HepG2 (cell line): ENCODE measurements at regions of chr10 and their contacts with region 1.

Region 1: GRCh38 chr10:104121520-104122224 is at the start of gene SFR1:
- DNase-seq: peak; percentile 95
- ATAC-seq: peak; percentile 95
- H3K4me3 ChIP-seq: peak within 1 kb of the TSS; percentile 78 to 87 (median 83)
- H3K27ac ChIP-seq: peak within 1 kb of the TSS; percentile 98
- H3K4me1 ChIP-seq: peaks cover 23% of the 10 kb centered on the region
- H3K27me3 ChIP-seq: peaks cover 0 to 2% of the 10 kb centered on the region in 2 experiments; a peak in 1 of 5 replicates
- CTCF ChIP-seq: peak; percentile 90
- EP300 ChIP-seq: no peak; a peak in 1 of 4 replicates
- POLR2A ChIP-seq: peak; percentile 71 to 92
- RAD21 ChIP-seq: peak; percentile 50
- total RNA-seq, gene SFR1: 6.1 and 6.9 TPM in 2 replicates

Region 2: GRCh38 chr10:103888113-103888841 is 233.4 kb before region 1 on chr10:
- CTCF ChIA-PET with region 1: no interaction called
- POLR2A ChIA-PET with region 1: no interaction called
- in situ Hi-C with region 1: loop called (anchors 5 kb)
- intact Hi-C with region 1: no loop called
- DNase-seq: peak; percentile 41
- ATAC-seq: peak; percentile 71
- H3K4me3 ChIP-seq: no peak overlapping the region
- H3K27ac ChIP-seq: no peak overlapping the region
- H3K4me1 ChIP-seq: peaks cover 30% of the 10 kb centered on the region
- H3K27me3 ChIP-seq: no peaks in the 10 kb centered on the region
- CTCF ChIP-seq: peak; percentile 81
- EP300 ChIP-seq: no peak
- POLR2A ChIP-seq: no peak
- RAD21 ChIP-seq: peak; percentile 72

Region 3: DNA sequence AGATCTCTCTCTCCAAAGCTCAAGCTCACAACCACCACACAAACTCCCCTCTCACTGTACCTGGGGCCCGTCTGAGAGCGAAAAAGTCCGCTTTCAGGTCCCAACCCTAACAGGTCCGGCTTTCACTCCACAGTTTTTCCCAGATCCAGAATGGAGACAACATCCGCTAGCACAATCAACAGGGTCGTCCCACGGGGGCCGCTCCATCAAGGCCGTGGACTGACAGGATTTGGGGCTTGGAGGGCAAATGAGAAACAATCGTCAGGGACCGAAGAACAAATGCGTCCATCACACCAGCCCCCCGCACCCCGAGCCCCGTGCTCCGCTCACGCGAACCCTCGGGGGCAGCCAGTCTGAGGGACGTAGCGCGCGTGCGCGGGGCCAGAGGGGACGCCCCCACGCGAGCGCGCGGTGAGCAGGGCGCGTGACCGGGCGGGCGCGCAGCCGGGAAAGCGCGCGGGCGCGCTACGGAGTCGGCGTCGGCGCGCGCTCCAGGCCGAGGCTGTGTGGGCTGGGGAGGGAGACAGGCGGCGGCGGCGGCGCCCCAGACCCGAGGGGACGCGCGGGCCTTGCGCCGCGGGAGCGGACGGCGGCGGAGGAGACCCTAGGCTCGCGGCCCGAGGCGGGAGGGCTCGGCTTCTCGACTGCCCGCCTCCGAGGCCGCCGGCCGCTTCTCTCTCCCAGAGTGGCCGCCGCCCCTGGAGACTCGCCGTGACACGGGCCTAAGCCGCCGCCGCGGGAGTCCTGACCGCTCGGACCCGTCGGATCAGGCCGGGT is 154.8 kb before region 1 on chr10 and contains the start of gene SLK:
- CTCF ChIA-PET with region 1: no interaction called
- POLR2A ChIA-PET with region 1: interaction called, 5 read pairs
- in situ Hi-C with region 1: no loop called
- intact Hi-C with region 1: loop called (anchors 5 kb)
- DNase-seq: peak; percentile 53
- ATAC-seq: peak; percentile 87
- H3K4me3 ChIP-seq: peak within 1 kb of the TSS; percentile 83 to 93 (median 88)
- H3K27ac ChIP-seq: peak within 1 kb of the TSS; percentile 85
- H3K4me1 ChIP-seq: peaks cover 35% of the 10 kb centered on the region
- H3K27me3 ChIP-seq: peaks cover 0 to 3% of the 10 kb centered on the region in 2 experiments; a peak in 1 of 5 replicates
- CTCF ChIP-seq: no peak
- EP300 ChIP-seq: no peak
- POLR2A ChIP-seq: peak; percentile 44 to 85; a peak in 3 of 4 replicates
- RAD21 ChIP-seq: no peak; the same call in 1 of the 2 replicates
- total RNA-seq, gene SLK: 22.8 and 35.0 TPM in 2 replicates

Region 4: GRCh38 chr10:104045151-104046089 is 76.3 kb before region 1 on chr10:
- CTCF ChIA-PET with region 1: no interaction called
- POLR2A ChIA-PET with region 1: no interaction called
- in situ Hi-C with region 1: no loop called
- intact Hi-C with region 1: no loop called
- DNase-seq: peak; percentile 45
- ATAC-seq: peak; percentile 89
- H3K4me3 ChIP-seq: no peak overlapping the region
- H3K27ac ChIP-seq: no peak overlapping the region
- H3K4me1 ChIP-seq: peaks cover 9% of the 10 kb centered on the region
- H3K27me3 ChIP-seq: peaks cover 6 to 71% of the 10 kb centered on the region in 2 experiments
- CTCF ChIP-seq: peak; percentile 70
- EP300 ChIP-seq: no peak
- POLR2A ChIP-seq: no peak
- RAD21 ChIP-seq: peak; percentile 58

Region 5: DNA sequence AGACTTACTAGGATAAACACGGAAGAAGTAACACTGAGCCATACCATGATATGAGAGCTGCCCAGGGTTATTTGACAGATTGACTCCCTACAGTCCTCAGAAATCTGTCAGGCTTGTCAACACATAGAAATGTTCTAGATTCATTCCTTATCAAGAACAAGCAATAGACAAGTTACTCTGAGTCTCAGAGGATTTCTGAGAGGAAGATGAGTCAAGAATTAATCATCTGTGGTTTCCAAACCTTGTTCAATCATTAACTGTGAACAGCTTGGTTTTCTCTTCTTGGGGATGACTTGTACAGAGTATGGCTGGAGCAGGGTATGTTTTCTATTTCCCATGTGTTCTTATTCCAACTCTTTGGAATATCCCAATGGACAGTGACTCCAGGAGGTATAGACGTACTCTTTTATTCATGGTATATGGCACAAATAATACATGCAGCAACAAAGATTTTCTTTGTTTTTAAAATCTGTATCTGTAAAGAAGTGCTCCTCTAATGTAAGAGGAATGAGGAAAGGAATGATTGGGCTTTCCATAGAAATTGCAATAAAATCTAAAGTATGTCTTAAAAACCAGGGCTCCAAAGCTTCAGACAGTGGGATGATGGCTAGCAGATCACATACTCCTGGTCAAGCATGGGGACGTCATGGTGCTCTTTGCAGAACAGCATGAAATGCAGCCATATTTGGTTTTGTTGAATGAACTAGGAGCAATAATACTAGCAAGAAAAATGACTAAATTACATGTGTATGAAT is 11.6 kb before region 1 on chr10:
- CTCF ChIA-PET with region 1: no interaction called
- POLR2A ChIA-PET with region 1: interaction called, 16 read pairs
- in situ Hi-C with region 1: no loop called
- intact Hi-C with region 1: no loop called
- DNase-seq: peak; percentile 35
- ATAC-seq: peak; percentile 55; the same call in 2 of the 3 replicates
- H3K4me3 ChIP-seq: no peak overlapping the region
- H3K27ac ChIP-seq: no peak overlapping the region
- H3K4me1 ChIP-seq: peaks cover 12% of the 10 kb centered on the region
- H3K27me3 ChIP-seq: no peaks in the 10 kb centered on the region
- CTCF ChIP-seq: no peak
- EP300 ChIP-seq: peak in 1 of 2 experiments; percentile 35; a peak in 1 of 4 replicates
- POLR2A ChIP-seq: no peak
- RAD21 ChIP-seq: no peak

Region 6: GRCh38 chr10:104231784-104232612 is 110.3 kb after region 1 on chr10 and contains the start of gene CFAP43:
- CTCF ChIA-PET with region 1: no interaction called
- POLR2A ChIA-PET with region 1: interaction called, 12 read pairs
- in situ Hi-C with region 1: no loop called
- intact Hi-C with region 1: no loop called
- DNase-seq: peak; percentile 93
- ATAC-seq: peak; percentile 100
- H3K4me3 ChIP-seq: peak within 1 kb of the TSS; percentile 79 to 93 (median 86)
- H3K27ac ChIP-seq: peak within 1 kb of the TSS; percentile 82
- H3K4me1 ChIP-seq: peaks cover 21% of the 10 kb centered on the region
- H3K27me3 ChIP-seq: no peaks in the 10 kb centered on the region; a peak in 1 of 5 replicates
- CTCF ChIP-seq: no peak; the same call in 1 of the 2 replicates
- EP300 ChIP-seq: no peak
- POLR2A ChIP-seq: peak; percentile 49 to 61; a peak in 3 of 4 replicates
- RAD21 ChIP-seq: peak; percentile 30; the same call in 1 of the 2 replicates
- total RNA-seq, gene CFAP43: 0.24 and 0.46 TPM in 2 replicates

Region 7: DNA sequence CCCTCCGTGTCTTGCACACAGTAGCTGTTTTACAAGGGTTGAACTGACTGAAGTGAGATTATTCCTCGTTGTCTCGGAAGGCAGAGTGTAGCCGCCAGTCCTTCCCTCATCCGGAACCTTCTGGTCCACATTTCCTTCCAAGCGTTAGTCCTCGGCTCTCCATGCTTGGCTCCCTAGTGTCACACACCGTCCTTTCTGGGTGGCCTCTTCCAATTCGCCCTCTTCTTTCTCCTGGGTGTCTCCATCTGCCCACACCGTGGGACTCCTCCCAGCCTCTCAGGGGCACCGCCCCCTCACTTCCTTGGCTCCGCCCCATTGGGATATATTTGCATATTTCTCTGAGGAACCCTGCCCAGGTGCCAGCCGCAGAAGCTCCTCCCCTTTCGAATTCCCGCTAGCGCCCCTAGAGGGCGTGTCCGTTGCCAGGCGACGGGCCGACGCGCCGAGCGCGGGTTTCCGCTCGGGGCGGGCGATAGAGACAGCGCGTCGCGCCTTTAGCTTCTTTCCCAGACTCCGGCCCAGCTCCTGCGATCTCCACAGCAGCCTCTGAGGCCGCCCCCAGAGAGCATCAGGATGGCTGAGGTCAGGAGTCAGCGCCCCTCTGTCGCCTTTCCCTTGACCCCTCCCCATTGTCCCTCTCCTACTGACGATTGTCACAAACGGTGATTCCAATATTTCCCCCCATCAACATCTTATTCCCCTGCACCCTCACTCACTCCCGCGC is 231.8 kb after region 1 on chr10 and contains the start of gene CFAP58:
- CTCF ChIA-PET with region 1: no interaction called
- POLR2A ChIA-PET with region 1: no interaction called
- in situ Hi-C with region 1: no loop called
- intact Hi-C with region 1: loop called (anchors 5 kb)
- DNase-seq: peak; percentile 45
- ATAC-seq: peak; percentile 62
- H3K4me3 ChIP-seq: peak within 1 kb of the TSS in 1 of 3 experiments; percentile 17; a peak in 1 of 6 replicates
- H3K27ac ChIP-seq: no peak within 1 kb of the TSS
- H3K4me1 ChIP-seq: peaks cover 28% of the 10 kb centered on the region
- H3K27me3 ChIP-seq: peaks cover 0 to 22% of the 10 kb centered on the region in 2 experiments; a peak in 3 of 5 replicates
- CTCF ChIP-seq: peak; percentile 73
- EP300 ChIP-seq: no peak
- POLR2A ChIP-seq: no peak
- RAD21 ChIP-seq: 0 out of 2 replicates have a peak, but pooled peaks have one; percentile 16
- total RNA-seq, gene CFAP58: not detected in 2 replicates

Region 8: GRCh38 chr10:104622598-104623209 is 501.0 kb after region 1 on chr10:
- CTCF ChIA-PET with region 1: no interaction called
- POLR2A ChIA-PET with region 1: no interaction called
- in situ Hi-C with region 1: no loop called
- intact Hi-C with region 1: no loop called
- DNase-seq: peak; percentile 16
- ATAC-seq: peak; percentile 91
- H3K4me3 ChIP-seq: no peak overlapping the region
- H3K27ac ChIP-seq: no peak overlapping the region
- H3K4me1 ChIP-seq: no peaks in the 10 kb centered on the region
- H3K27me3 ChIP-seq: no peaks in the 10 kb centered on the region
- CTCF ChIP-seq: peak; percentile 75
- EP300 ChIP-seq: no peak
- POLR2A ChIP-seq: no peak
- RAD21 ChIP-seq: peak; percentile 30; the same call in 1 of the 2 replicates